ENCODE measurements at regions of chr5 and their contacts with region 1.

Region 1: GRCh38 chr5:160399402-160400353 is at the start of gene FAM200C:
- DNase-seq: peak; percentile 83 to 97
- H3K4me3 ChIP-seq: peak within 1 kb of the TSS; percentile 72
- CTCF ChIP-seq: no peak
- POLR2A ChIP-seq: peak in 1 of 2 donors; percentile 80
- total RNA-seq, gene FAM200C: 1.3 to 3.2 (median 2.3) TPM

Region 2: DNA sequence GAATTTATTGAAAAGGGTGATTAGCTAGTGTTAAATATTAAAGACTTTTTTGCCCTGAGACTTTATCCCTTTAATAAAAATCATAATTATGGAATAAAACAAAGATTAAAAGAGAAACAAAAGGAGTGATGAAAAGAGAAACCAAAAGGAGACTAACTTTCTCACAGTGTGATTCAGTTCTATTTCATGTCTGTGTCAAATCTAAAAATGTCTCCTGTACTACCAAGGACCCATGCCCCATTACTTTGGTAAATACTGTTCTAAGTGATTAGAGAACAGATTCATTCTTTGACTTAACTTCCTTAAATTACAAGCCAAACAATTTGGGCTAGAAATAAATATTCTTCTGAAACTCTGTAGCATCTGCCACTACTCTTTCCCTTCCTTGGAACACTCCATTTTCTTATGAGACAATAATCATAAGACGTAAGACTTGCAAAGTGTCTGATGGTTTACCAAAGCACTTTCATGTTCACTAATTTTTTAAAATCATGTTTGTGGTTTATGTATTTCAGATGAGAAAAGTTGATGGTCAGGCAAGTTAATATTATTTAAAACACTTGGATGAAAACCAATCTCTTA is 1618.9 kb before region 1 on chr5:
- intact Hi-C with region 1: no loop called
- DNase-seq: no peak
- H3K4me3 ChIP-seq: no peak overlapping the region
- CTCF ChIP-seq: no peak
- POLR2A ChIP-seq: no peak

Region 3: GRCh38 chr5:160030631-160031377 is 368.9 kb before region 1 on chr5:
- intact Hi-C with region 1: loop called (anchors 5 kb)
- DNase-seq: no peak
- H3K4me3 ChIP-seq: no peak overlapping the region
- CTCF ChIP-seq: no peak
- POLR2A ChIP-seq: no peak

Region 4: GRCh38 chr5:160665460-160665859 is 265.8 kb after region 1 on chr5:
- intact Hi-C with region 1: no loop called
- DNase-seq: no peak
- H3K4me3 ChIP-seq: no peak overlapping the region
- CTCF ChIP-seq: no peak
- POLR2A ChIP-seq: no peak